ENCODE measurements at regions of chr1 and their contacts with region 1.

Region 1: DNA sequence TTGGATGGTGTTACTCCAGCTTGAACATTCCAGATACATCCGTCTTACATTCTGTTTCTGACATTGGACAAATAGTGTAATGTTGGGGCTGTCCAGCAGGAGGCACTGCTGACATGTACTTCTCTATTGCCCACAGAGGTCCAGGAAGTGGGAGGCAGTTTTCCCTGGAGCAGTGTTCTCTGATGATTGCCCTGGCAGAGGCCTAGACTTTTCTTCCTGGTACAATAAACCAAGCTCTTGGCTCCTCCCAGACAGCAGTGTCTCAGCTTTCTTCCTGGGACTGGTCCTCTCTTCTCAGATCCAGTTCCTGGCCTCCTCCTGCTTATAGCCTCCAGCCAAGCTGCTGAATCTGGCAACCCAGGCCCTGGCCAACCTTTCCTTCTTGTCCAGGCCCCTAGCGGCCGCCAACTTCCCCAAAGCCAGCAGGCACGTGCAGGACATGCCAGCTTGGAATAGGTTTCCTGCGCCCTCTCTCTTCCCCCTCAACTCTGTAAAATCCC is 14.9 kb upstream of the IFNLR1 start:
- DNase-seq: peak; percentile 84
- H3K4me3 ChIP-seq: no peak overlapping the region
- H3K27ac ChIP-seq: no peak overlapping the region
- H3K4me1 ChIP-seq: peaks cover 4% of the 10 kb centered on the region
- H3K27me3 ChIP-seq: no peaks in the 10 kb centered on the region
- CTCF ChIP-seq: peak; percentile 90

Region 2: GRCh38 chr1:24070821-24071393 is 131.1 kb before region 1 on chr1:
- CTCF ChIA-PET with region 1: interaction called, 3 read pairs
- POLR2A ChIA-PET with region 1: no interaction called
- intact Hi-C with region 1: loop called (anchors 5 kb)
- DNase-seq: peak; percentile 88
- H3K4me3 ChIP-seq: no peak overlapping the region
- H3K27ac ChIP-seq: no peak overlapping the region
- H3K4me1 ChIP-seq: no peaks in the 10 kb centered on the region
- H3K27me3 ChIP-seq: no peaks in the 10 kb centered on the region
- CTCF ChIP-seq: peak; percentile 95

Region 3: DNA sequence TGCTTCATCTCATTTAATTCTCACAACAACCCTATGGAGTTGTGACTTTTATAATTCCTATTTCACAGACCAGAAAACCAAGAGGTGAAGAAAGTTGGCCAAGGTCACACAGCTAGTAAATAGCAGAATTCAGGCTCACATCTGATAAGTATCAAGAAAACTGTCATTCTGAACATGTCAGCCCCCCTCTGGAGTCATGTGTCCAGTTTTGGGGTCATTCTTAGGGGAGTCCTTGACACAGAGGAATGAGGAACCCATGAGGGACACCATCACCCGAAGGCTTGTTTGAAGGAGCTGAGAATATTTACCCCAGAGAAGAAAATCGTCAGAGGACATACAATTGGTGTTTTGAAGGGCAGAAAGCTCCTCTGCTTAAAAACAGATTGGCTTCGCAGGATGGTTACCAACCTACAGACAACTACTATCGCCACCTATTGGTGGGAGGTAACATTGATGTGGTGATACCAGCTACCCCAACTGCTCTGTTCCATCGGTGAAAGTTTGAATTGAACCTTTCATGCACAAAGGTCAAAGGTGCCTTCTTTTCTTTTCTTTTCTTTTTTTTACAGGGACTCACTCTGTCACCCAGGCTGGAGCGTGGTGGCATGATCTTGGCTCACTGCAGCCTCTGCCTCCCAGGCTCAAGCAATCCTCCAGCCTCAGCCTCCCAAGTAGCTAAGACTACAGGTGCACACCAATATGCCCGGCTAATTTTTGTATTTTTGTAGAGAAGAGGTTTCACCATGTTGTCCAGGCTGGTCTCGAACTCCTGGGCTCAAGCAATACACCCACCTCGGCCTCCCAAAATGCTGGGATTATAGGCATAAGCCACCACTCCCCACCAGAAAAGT is 385.2 kb after region 1 on chr1:
- CTCF ChIA-PET with region 1: interaction called, 12 read pairs
- POLR2A ChIA-PET with region 1: no interaction called
- intact Hi-C with region 1: no loop called
- DNase-seq: peak; percentile 73
- H3K4me3 ChIP-seq: no peak overlapping the region
- H3K27ac ChIP-seq: no peak overlapping the region
- H3K4me1 ChIP-seq: no peaks in the 10 kb centered on the region
- H3K27me3 ChIP-seq: peaks cover 6% of the 10 kb centered on the region
- CTCF ChIP-seq: peak; percentile 80

Region 4: DNA sequence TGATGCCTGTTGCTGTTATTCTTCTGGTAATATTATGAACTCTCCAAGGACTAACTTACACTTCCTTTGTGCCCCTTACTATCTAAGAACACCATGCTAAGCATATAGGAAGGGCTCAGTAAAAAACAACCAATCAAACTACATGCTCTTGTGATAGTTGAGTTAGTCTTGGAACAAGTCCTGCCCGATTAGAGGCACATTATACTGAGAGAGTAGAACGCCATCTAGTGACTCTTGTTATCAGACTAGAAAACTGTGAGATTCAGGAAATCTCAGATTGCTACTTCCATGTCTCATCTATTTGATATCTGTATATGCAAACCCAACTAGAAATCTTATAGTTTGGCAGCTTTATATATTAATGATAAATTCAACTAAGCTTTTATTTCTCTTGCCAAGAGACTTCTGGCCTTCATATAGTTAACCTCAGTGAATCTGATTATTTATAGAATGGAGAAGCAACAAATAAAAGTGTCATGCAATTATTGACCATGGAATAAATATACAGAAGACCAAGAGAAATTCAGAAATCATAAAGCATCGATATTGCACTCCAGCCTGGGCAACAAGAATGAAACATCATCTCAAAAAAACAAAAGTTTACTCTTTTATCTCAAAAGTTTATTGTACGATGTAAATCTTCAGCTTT is 433.3 kb after region 1 on chr1:
- CTCF ChIA-PET with region 1: no interaction called
- POLR2A ChIA-PET with region 1: no interaction called
- intact Hi-C with region 1: loop called (anchors 2 kb)
- DNase-seq: peak; percentile 86
- H3K4me3 ChIP-seq: no peak overlapping the region
- H3K27ac ChIP-seq: no peak overlapping the region
- H3K4me1 ChIP-seq: peaks cover 4% of the 10 kb centered on the region
- H3K27me3 ChIP-seq: no peaks in the 10 kb centered on the region
- CTCF ChIP-seq: peak; percentile 82

Measured in A673 (cell line).